Sigmoid colon (tissue), 7 donors: ENCODE measurements at regions of chr1 and their contacts with region 1.

Region 1: DNA sequence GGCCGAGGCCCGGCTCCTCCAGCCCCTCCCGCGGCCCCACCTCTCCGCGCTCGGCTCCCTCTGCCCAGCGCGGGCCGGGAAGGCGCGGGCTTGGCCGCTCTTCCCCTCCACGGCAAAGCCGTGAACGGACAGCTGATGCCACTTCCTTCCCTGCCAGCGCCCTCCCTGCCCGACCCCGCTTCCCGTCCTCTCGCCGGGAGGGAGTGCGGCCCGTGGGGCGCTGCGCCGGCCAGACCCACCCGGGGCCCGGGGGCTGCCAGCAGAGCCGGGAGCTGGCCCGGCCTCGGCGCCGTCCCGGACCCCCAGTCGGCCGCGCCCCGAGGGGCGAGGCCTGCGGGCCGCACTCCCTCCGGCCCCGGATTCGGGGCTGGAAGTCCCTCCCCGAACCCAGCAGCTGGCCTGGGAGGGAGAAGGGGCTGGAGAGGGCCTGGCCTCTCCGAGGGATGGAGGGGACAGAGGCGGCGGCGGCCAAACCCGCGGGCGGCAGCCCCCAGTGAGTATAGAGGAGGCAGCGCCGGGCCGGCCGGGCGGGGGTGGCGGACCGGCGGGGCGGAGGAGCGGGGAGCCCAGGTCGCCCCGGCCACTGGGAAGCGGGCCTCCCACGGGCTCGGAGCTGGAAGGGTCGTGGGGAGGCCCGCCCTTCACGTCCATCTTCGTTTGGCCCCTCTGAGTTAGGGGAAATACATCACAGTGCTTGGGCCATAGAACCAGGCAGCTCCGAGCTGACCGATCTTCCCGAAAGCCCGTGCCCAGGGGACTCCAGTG is at the start of gene KIAA1614:
- DNase-seq: peak; percentile 75
- H3K4me3 ChIP-seq: peak within 1 kb of the TSS; percentile 53 to 85 (median 76)
- H3K27ac ChIP-seq: peak within 1 kb of the TSS; percentile 85 to 98 (median 92)
- H3K4me1 ChIP-seq: peaks cover 0 to 39% (median 24%) of the 10 kb centered on the region in 4 donors
- H3K27me3 ChIP-seq: no peaks in the 10 kb centered on the region
- CTCF ChIP-seq: no peak
- EP300 ChIP-seq: no peak
- POLR2A ChIP-seq: no peak
- total RNA-seq, gene KIAA1614: 6.3 to 14.8 (median 10.5) TPM

Region 2: GRCh38 chr1:180837020-180837419 is 76.0 kb before region 1 on chr1:
- intact Hi-C with region 1: no loop called
- DNase-seq: no peak
- H3K4me3 ChIP-seq: no peak overlapping the region
- H3K27ac ChIP-seq: no peak overlapping the region
- H3K4me1 ChIP-seq: no peaks in the 10 kb centered on the region
- H3K27me3 ChIP-seq: no peaks in the 10 kb centered on the region
- CTCF ChIP-seq: no peak
- EP300 ChIP-seq: no peak
- POLR2A ChIP-seq: no peak

Region 3: DNA sequence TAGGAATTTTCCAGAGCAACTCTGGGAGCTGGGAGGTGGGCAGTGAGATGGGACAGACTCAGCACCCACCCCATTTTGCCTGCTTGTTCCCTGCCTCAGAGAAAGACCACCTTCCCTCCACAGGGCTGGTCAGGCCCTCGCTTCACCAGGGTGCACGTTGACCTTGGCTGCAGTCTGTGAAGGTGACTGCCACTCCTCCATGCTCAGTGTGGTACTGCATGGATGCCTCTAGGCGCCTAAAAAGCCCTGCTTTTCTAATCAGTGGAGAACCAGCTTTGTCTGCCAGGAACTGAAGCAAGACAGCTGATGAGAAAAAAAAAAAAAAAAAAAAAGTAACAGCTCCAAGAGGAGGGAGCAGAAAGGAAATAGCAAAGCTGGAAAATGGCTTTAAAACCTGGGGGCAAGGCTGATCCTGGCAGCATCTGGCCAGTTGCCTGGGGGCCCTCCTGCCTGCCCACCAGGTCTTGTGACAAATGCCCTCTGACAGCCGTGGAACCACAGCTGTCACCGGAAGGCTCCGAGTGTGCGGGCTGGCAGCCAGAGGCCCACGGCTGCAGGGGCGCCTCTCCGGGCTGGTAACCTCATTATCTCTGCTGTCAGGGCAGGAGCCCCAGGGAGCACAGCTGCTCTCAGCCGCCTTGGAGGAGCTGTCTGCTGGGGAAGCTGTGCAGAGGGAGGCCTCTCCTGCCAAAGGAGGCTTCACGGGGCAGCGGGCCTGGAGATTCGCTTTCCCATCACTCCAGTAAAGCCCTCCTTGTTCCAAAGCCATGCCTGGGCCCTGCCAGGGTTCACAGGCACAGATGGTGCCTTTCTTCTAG is 13.4 kb after region 1 on chr1:
- intact Hi-C with region 1: loop called (anchors 2 kb)
- DNase-seq: peak; percentile 84
- H3K4me3 ChIP-seq: peak overlapping the region in 3 of 4 donors; percentile 5 to 20 (median 12)
- H3K27ac ChIP-seq: peak overlapping the region; percentile 80 to 89 (median 86)
- H3K4me1 ChIP-seq: peaks cover 0 to 53% (median 46%) of the 10 kb centered on the region in 4 donors
- H3K27me3 ChIP-seq: no peaks in the 10 kb centered on the region
- CTCF ChIP-seq: no peak
- EP300 ChIP-seq: no peak
- POLR2A ChIP-seq: no peak

Region 4: DNA sequence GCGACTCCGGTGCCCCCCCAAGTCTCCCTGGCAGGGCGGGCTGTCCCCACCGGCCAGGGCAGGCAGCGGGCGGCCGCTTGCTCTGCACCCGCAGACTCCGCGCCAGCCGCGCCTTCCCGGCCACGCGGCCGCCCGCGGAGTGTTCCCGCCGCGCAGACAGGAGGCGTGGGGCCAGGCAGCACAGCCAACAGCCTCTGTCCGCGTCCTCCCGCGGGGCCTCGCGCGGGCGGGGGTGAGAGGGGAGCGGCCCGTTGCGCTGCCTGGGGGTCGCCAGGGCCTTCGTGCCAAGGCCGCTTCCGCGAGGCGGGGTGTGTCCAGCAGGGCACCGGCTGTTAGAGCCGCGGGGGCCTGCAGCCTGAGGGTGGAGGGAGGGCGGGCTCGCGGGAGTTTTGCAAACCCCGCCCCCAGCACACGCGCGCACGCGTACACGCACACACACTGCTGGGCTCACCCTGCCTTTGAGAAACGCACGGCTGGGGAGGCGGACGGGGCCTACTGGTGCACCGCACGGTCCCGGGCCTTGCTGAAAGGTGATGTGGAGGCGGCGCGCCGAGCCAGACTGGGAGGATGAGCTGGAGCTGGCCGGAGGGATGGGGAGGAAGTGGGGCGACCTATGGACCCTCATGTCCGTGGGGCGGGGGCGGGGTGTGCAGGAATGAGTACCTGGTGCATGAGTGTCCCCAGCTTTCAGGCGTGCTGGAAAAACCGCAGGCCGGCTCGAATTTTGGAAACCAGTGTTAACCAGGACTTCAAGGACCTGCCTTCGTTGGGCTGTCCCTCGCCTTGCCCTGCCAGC is 41.2 kb after region 1 on chr1:
- intact Hi-C with region 1: loop called (anchors 5 kb)
- DNase-seq: peak; percentile 90
- H3K4me3 ChIP-seq: peak overlapping the region; percentile 48 to 65 (median 56)
- H3K27ac ChIP-seq: peak overlapping the region; percentile 54 to 81 (median 77)
- H3K4me1 ChIP-seq: peaks cover 0 to 21% (median 14%) of the 10 kb centered on the region in 4 donors
- H3K27me3 ChIP-seq: no peaks in the 10 kb centered on the region
- CTCF ChIP-seq: peak in 1 of 4 experiments; percentile 7
- EP300 ChIP-seq: no peak
- POLR2A ChIP-seq: no peak

Region 5: GRCh38 chr1:180981596-180982387 is 68.8 kb after region 1 on chr1:
- intact Hi-C with region 1: no loop called
- DNase-seq: no peak
- H3K4me3 ChIP-seq: no peak overlapping the region
- H3K27ac ChIP-seq: no peak overlapping the region
- H3K4me1 ChIP-seq: peaks cover 0 to 12% (median 2%) of the 10 kb centered on the region in 4 donors
- H3K27me3 ChIP-seq: no peaks in the 10 kb centered on the region
- CTCF ChIP-seq: no peak
- EP300 ChIP-seq: no peak
- POLR2A ChIP-seq: no peak

Region 6: DNA sequence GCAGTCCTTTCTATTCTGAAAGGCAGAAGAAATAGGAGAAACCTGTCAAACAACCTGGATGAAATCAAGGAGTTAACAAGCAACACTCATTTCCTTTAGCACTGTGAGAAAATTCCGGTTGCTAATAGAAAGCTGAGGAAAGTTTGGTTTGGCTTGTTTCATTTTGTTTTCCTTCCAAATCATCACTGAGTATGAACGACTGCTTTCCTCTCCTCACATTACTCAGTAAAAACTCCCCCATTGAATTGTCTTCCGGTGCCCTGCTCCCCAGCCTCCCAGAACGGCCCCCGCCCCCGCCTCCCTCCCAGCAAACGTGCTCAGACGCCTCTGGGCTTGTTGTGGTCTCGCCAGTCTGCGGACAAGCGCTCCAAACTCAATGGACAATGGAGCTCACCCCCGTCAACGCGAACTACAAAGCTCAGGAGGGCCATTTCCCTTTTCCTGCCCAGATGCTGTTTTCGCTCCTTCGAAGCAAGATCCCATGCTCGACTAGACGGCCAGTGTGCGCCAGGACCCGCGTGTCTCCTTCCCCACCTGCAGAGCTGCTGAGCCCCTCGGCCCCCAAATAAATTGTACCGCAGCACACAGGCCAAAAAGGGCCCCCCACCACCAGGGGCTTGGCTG is 108.9 kb after region 1 on chr1:
- intact Hi-C with region 1: loop called (anchors 5 kb)
- DNase-seq: peak; percentile 82
- H3K4me3 ChIP-seq: peak overlapping the region; percentile 89 to 99 (median 98)
- H3K27ac ChIP-seq: peak overlapping the region; percentile 90 to 97 (median 96)
- H3K4me1 ChIP-seq: peaks cover 5 to 20% (median 18%) of the 10 kb centered on the region in 4 donors
- H3K27me3 ChIP-seq: no peaks in the 10 kb centered on the region
- CTCF ChIP-seq: no peak
- EP300 ChIP-seq: no peak
- POLR2A ChIP-seq: no peak

Region 7: DNA sequence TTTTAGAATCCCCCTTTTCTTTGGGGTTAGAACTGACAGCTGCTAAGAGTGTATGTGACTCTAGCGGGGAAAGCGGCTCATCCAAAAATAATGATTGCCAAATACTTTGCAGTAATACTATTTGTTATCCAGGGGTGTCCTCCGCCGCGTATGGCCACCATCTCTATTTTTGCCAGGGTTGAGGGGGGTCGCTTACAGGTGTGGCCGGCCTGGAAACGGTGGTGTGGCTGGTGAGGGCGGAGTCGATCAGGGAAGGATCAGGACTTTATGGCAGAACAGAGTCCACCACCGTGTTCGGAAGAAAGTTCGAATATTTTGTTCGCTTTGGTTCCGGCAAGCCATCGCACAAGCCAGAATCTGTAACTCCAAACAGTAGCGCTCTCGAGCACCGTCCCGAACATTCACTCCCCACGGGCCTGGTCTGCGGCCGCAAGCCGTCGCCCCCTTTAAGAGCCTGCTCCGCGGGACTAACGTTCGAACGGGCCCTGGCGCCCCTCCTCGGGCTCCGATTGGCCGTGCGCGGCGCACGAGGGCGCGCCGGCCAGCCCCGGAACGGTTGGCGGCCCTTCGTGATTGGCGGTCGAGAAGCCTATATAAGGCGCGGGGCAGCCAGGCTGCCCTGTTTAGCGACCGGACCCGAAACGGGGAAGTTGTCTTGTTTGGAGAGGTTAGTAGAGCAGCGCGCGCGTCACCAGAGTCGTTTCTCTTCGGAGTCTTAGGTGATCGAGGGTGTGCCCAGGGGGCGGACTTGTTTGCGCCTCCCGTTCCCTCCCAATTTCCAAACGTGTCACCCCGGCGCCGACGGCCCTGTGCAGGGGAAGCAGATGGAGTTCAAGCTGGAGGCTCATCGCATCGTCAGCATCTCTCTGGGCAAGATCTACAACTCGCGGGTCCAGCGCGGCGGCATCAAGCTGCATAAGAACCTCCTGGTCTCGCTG is 175.4 kb after region 1 on chr1 and contains the start of gene IER5:
- intact Hi-C with region 1: loop called (anchors 5 kb)
- DNase-seq: peak; percentile 98
- H3K4me3 ChIP-seq: peak within 1 kb of the TSS; percentile 65 to 97 (median 84)
- H3K27ac ChIP-seq: peak within 1 kb of the TSS; percentile 90 to 99 (median 95)
- H3K4me1 ChIP-seq: peaks cover 0 to 38% (median 34%) of the 10 kb centered on the region in 4 donors
- H3K27me3 ChIP-seq: no peaks in the 10 kb centered on the region
- CTCF ChIP-seq: no peak
- EP300 ChIP-seq: no peak
- POLR2A ChIP-seq: peak; percentile 100
- total RNA-seq, gene IER5: 7.7 to 11.5 (median 8.5) TPM